ENCODE measurements at regions of chr15 and their contacts with region 1.

Region 1: DNA sequence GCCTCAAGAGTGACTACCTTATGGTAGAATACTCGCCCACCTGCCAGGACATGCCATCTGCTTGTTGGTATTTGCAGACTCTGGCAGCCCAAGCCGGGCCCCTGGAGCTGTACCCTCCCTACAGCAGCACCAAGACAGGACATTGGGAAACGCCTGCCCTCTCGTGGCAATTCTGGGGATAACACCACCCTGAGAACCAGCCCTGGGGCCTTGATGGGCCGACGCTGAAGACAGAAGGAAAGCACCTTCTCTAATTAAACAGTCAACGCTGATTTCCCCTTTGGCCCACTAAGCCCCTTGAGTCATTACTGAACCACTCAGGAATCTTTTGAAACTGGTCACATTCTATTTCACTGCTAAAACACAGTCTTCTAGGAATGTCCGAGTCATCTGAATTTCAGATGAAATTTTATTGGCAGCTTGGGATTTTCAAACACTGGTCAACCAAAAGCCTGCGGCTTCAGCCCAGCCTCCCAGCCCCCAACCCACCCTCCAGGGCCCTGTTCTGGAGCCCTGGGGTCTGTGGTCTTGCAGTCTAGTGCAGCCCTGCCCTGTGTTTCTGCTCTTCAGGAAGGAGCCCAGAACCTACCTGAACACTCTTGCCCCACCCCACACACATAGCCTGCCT is 91.3 kb downstream of the TMEM266 start:
- DNase-seq: peak; percentile 74
- H3K4me3 ChIP-seq: no peak overlapping the region
- H3K27me3 ChIP-seq: peaks cover 2% of the 10 kb centered on the region; the same call in 1 of the 2 replicates
- CTCF ChIP-seq: peak; percentile 86

Region 2: DNA sequence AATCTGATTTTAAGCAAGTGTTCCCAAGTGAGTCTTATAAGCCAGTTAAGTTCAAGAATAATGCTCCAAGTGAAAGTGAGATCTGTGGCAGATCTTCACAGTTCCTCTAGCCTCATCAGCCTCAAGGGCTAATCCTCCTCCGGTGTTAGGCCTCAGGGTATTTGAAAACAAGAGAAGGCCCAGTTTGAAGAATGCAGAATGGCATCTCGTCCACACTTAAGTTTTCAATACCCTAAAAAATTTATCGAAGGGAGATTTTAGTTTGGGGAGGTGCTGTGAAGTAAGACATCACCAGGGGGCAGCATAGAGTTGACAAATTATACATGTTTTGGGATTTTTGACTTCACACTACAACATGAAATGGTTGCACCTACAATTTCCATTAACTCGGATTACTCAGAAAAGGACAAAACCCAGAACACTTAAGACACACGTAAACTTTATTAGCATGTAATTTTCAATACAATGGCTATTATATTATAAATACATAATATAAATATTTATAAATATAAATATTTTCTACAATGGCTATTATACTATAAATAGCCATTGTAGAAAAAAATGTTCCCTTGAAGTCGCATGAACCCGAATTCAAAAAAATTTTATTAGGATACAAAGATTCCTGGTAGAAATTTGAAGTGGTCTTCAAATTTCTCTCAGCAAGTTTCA is 93.6 kb before region 1 on chr15:
- CTCF ChIA-PET with region 1: interaction called, 13 read pairs
- POLR2A ChIA-PET with region 1: no interaction called
- DNase-seq: no peak
- H3K4me3 ChIP-seq: no peak overlapping the region
- H3K27me3 ChIP-seq: peaks cover 26% of the 10 kb centered on the region
- CTCF ChIP-seq: peak; percentile 77

Region 3: GRCh38 chr15:76139368-76140073 is 11.6 kb before region 1 on chr15:
- CTCF ChIA-PET with region 1: interaction called, 127 read pairs
- POLR2A ChIA-PET with region 1: no interaction called
- DNase-seq: no peak
- H3K4me3 ChIP-seq: no peak overlapping the region
- H3K27me3 ChIP-seq: peaks cover 11% of the 10 kb centered on the region
- CTCF ChIP-seq: peak; percentile 96

Region 4: DNA sequence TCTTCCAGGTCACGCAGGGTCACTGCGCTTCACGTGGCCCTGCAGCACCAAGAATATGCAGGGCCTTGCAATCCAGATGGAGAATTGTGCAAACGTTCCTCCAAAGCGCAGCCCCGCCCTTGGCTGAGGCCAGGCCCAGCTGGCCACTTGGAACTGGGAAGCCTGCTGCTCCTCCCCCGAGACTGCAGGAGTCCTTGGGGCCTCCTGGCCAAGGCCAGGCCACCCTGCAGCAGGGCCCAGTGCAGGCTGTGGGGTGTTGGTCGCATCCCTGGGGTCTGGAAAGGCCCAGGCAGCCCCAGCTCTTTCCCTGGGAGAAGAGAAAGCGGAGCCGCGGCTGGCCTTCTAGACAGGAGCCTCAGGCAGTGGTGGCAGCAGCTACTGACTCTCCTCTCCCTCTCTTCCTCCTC is 12.4 kb after region 1 on chr15:
- CTCF ChIA-PET with region 1: interaction called, 27 read pairs
- POLR2A ChIA-PET with region 1: no interaction called
- DNase-seq: peak; percentile 68
- H3K4me3 ChIP-seq: no peak overlapping the region
- H3K27me3 ChIP-seq: no peaks in the 10 kb centered on the region
- CTCF ChIP-seq: no peak

Region 5: GRCh38 chr15:76169013-76169412 is 17.9 kb after region 1 on chr15:
- CTCF ChIA-PET with region 1: interaction called, 27 read pairs
- POLR2A ChIA-PET with region 1: no interaction called
- DNase-seq: no peak
- H3K4me3 ChIP-seq: no peak overlapping the region
- H3K27me3 ChIP-seq: no peaks in the 10 kb centered on the region
- CTCF ChIP-seq: no peak

Region 6: GRCh38 chr15:76185716-76186115 is 34.6 kb after region 1 on chr15:
- CTCF ChIA-PET with region 1: interaction called, 15 read pairs
- POLR2A ChIA-PET with region 1: no interaction called
- DNase-seq: peak; percentile 49
- H3K4me3 ChIP-seq: no peak overlapping the region
- H3K27me3 ChIP-seq: no peaks in the 10 kb centered on the region
- CTCF ChIP-seq: peak; percentile 67

Region 7: DNA sequence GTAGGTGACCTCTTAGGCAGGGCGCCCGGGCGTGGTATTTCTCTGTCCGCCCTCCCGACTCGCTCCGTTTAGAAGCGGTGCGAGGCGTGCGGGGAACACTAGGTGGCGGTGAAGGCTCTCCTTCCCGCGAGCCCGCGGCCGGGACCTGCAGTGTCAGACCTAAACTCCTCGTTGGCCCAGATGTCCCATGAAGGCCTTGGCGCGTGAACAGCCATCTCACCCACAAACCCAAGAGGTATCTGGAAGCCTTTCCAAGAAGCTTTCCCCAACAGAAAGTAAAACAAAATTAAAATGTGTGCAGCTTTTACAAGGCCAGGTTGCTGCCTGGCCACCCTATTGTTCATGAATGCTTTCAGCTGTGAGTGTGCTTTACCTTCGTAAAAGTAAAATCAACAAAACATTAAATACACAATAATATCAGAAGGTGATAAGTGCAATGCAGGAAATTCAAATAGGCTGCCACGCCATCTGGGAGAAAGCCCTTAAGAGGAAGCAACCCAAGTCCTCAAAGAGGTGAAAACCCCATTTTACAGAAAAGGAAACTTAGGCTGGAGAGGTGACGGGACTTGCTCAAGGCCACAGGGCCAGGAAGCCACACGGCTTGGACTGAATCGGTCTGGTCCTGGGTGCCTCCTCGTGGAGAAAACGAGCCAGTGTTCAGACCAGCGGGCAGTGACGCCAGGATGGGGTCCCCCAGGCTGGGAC is 39.9 kb after region 1 on chr15:
- CTCF ChIA-PET with region 1: interaction called, 15 read pairs
- POLR2A ChIA-PET with region 1: no interaction called
- DNase-seq: no peak
- H3K4me3 ChIP-seq: no peak overlapping the region
- H3K27me3 ChIP-seq: no peaks in the 10 kb centered on the region
- CTCF ChIP-seq: peak; percentile 95

Region 8: DNA sequence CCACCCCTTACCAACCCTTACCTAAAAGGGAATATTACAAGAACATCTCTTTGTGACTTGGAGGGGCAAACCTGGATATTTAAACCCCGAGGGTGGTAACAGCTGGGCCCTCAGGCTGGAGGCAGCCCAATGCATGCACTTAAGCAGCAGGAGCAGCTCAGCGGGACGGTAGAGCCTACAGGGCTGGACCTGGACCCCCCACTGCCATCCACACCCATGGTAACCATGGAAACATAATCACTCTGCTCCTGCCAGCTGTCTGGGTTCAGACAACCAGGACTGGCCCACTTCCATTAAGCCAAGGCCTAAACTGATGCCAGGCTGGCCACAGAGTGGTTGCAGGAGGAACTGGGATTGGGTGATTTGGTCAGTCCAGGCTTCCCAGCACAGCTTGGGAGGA is 107.4 kb after region 1 on chr15:
- CTCF ChIA-PET with region 1: no interaction called
- POLR2A ChIA-PET with region 1: no interaction called
- DNase-seq: no peak
- H3K4me3 ChIP-seq: no peak overlapping the region
- H3K27me3 ChIP-seq: no peaks in the 10 kb centered on the region
- CTCF ChIP-seq: no peak

Region 9: GRCh38 chr15:76614725-76615124 is 463.6 kb after region 1 on chr15:
- CTCF ChIA-PET with region 1: no interaction called
- POLR2A ChIA-PET with region 1: no interaction called
- DNase-seq: no peak
- H3K4me3 ChIP-seq: no peak overlapping the region
- H3K27me3 ChIP-seq: no peaks in the 10 kb centered on the region
- CTCF ChIP-seq: no peak

Measured in BJ (cell line).